BJ (cell line): ENCODE measurements at regions of chr4 and their contacts with region 1.

Region 1: GRCh38 chr4:156968479-156968984 is 3.1 kb downstream of the PDGFC start:
- DNase-seq: no peak
- H3K4me3 ChIP-seq: peak overlapping the region; percentile 75
- H3K27me3 ChIP-seq: no peaks in the 10 kb centered on the region
- CTCF ChIP-seq: peak; percentile 81

Region 2: DNA sequence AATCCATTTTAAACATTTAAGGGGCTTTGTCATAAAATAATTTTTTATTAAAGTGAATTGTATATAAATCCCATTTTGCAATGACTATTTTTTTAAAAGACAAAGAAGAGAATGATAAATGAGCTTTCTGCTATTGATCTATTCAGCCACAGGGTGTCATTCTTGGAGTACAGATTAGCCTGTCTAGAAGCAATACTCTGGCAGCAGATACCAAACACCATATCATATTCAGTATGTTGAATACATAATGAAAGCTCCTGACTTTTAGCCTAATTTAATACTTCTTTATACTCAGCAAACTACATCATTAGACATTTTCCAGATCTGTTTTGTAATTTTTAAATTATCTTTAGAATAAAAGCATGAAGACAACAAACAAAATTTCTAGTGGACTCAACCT is 493.2 kb before region 1 on chr4:
- CTCF ChIA-PET with region 1: interaction called, 47 read pairs
- POLR2A ChIA-PET with region 1: no interaction called
- DNase-seq: no peak
- H3K4me3 ChIP-seq: no peak overlapping the region
- H3K27me3 ChIP-seq: no peaks in the 10 kb centered on the region
- CTCF ChIP-seq: peak; percentile 57

Region 3: GRCh38 chr4:156771171-156771837 is 197.2 kb before region 1 on chr4:
- CTCF ChIA-PET with region 1: interaction called, 21 read pairs
- POLR2A ChIA-PET with region 1: no interaction called
- DNase-seq: no peak
- H3K4me3 ChIP-seq: no peak overlapping the region
- H3K27me3 ChIP-seq: no peaks in the 10 kb centered on the region
- CTCF ChIP-seq: no peak

Region 4: DNA sequence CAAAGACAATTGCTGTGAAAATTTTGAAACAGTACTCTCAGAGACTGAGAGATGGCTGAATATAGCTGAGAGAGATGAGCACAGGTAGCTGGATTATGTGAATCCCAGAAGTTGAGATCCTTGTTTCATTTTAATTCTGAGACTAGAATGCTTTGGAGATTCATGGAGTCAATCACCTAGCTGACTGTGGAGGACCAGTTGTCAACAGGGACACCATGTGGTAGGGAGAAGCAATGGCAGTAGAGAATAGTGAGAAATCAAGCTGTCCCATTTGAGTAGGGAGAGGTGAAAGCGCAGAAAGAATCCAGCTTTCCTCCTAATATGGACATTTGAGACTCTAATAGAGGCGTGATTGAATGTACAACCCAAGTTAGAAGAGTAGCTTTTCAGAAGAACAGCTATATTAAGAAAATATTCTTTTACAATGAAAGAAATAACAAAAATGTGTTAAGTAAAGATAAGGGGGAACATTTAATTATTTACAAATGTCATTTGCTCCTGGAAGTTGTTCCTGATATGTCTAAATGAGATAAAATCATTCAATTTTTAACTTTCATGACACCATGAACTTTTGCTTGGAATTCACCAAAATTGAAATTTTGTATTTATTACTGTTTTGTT is 77.1 kb after region 1 on chr4:
- CTCF ChIA-PET with region 1: interaction called, 35 read pairs
- POLR2A ChIA-PET with region 1: no interaction called
- DNase-seq: peak; percentile 14
- H3K4me3 ChIP-seq: no peak overlapping the region
- H3K27me3 ChIP-seq: no peaks in the 10 kb centered on the region
- CTCF ChIP-seq: peak; percentile 87

Region 5: GRCh38 chr4:157978680-157979361 is 1010.3 kb after region 1 on chr4:
- CTCF ChIA-PET with region 1: no interaction called
- POLR2A ChIA-PET with region 1: interaction called, 15 read pairs
- DNase-seq: no peak
- H3K4me3 ChIP-seq: no peak overlapping the region
- H3K27me3 ChIP-seq: peaks cover 2% of the 10 kb centered on the region; the same call in 1 of the 2 replicates
- CTCF ChIP-seq: peak; percentile 80